IMR-90 (cell line): ENCODE measurements at regions of chr10 and their contacts with region 1.

Region 1: GRCh38 chr10:67319976-67320375 is 376.0 kb downstream of the CTNNA3 start:
- DNase-seq: no peak
- ATAC-seq: no peak
- H3K4me3 ChIP-seq: no peak overlapping the region
- H3K27ac ChIP-seq: no peak overlapping the region
- H3K4me1 ChIP-seq: no peaks in the 10 kb centered on the region
- H3K27me3 ChIP-seq: no peaks in the 10 kb centered on the region
- CTCF ChIP-seq: no peak
- POLR2A ChIP-seq: no peak
- RAD21 ChIP-seq: no peak

Region 2: GRCh38 chr10:67306588-67307205 is 13.3 kb before region 1 on chr10:
- CTCF ChIA-PET with region 1: interaction called, 10 read pairs
- POLR2A ChIA-PET with region 1: no interaction called
- dilution Hi-C with region 1: no loop called
- in situ Hi-C with region 1: no loop called
- intact Hi-C with region 1: no loop called
- DNase-seq: peak; percentile 4
- ATAC-seq: no peak
- H3K4me3 ChIP-seq: no peak overlapping the region
- H3K27ac ChIP-seq: no peak overlapping the region
- H3K4me1 ChIP-seq: no peaks in the 10 kb centered on the region
- H3K27me3 ChIP-seq: no peaks in the 10 kb centered on the region
- CTCF ChIP-seq: peak; percentile 49
- POLR2A ChIP-seq: no peak
- RAD21 ChIP-seq: peak; percentile 19; the same call in 1 of the 2 replicates